Heart right ventricle (tissue), 16 donors: ENCODE measurements at regions of chr1 and their contacts with region 1.

Region 1: DNA sequence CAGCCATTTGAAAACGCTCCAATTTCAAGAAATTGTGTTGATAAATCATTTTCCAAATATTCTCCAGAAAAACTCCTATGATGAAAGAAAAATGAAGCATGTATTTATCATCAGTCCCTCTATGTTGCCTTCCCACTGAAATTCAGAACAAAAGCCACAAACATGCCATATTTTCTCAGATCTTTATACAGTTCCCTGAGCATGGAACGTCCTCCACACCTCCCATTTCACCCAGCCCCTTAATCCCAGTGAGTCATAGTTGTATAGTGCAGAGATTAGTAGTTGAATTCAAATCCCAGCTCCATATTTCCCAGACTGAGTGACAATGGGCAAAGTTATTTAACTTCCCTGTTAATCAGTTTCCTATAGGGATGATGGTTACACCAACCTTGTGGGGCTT is 20.6 kb upstream of the NPL start:
- DNase-seq: peak in 1 of 2 donors; percentile 25
- ATAC-seq: peak in 3 of 8 donors; percentile 40 to 57 (median 52)
- H3K4me3 ChIP-seq: no peak overlapping the region
- H3K27ac ChIP-seq: no peak overlapping the region
- H3K4me1 ChIP-seq: peaks cover 0 to 33% (median 8%) of the 10 kb centered on the region in 9 donors
- H3K27me3 ChIP-seq: no peaks in the 10 kb centered on the region
- CTCF ChIP-seq: no peak

Region 2: GRCh38 chr1:182446033-182446669 is 322.8 kb before region 1 on chr1:
- intact Hi-C with region 1: no loop called
- DNase-seq: peak in 1 of 2 donors; percentile 7
- ATAC-seq: peak in 1 of 8 donors; percentile 48
- H3K4me3 ChIP-seq: no peak overlapping the region
- H3K27ac ChIP-seq: no peak overlapping the region
- H3K4me1 ChIP-seq: peaks cover 0 to 3% (median 0%) of the 10 kb centered on the region in 9 donors
- H3K27me3 ChIP-seq: no peaks in the 10 kb centered on the region
- CTCF ChIP-seq: peak; percentile 13 to 78 (median 64)

Region 3: GRCh38 chr1:182622901-182623528 is 145.9 kb before region 1 on chr1:
- intact Hi-C with region 1: no loop called
- DNase-seq: peak in 1 of 2 donors; percentile 60
- ATAC-seq: peak; percentile 68 to 89 (median 84)
- H3K4me3 ChIP-seq: peak overlapping the region in 1 of 10 donors; percentile 5
- H3K27ac ChIP-seq: peak overlapping the region in 8 of 10 donors; percentile 21 to 72 (median 45)
- H3K4me1 ChIP-seq: peaks cover 0 to 46% (median 32%) of the 10 kb centered on the region in 9 donors
- H3K27me3 ChIP-seq: peaks cover 0 to 2% (median 0%) of the 10 kb centered on the region in 7 donors
- CTCF ChIP-seq: no peak

Region 4: DNA sequence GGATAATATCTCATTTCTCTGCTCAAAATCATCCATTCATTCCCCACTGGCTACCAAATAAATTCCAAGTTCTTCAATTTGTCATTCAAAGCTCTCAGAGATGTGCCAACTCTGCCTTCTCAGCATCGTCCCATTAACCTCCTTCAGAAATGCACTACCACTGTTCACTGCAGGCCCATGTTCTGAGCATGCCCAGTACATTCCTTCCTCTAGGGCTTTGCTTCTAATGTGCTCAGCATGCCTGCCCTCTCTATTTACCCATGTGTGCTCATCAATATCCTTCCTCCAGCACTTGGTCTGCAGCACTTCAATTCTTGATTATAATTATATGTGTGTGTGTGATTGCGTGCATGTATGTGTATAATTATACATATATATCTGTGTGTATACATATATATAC is 48.5 kb before region 1 on chr1:
- intact Hi-C with region 1: loop called in 1 of 10 experiments (anchors 2 kb)
- DNase-seq: no peak
- ATAC-seq: no peak
- H3K4me3 ChIP-seq: no peak overlapping the region
- H3K27ac ChIP-seq: no peak overlapping the region
- H3K4me1 ChIP-seq: peaks cover 0 to 4% (median 0%) of the 10 kb centered on the region in 9 donors
- H3K27me3 ChIP-seq: no peaks in the 10 kb centered on the region
- CTCF ChIP-seq: peak in 4 of 9 donors; percentile 7 to 24 (median 16)